Activated naive CD4-positive, alpha-beta T cell treated with anti-CD3 and anti-CD28 coated beads for 36 hours (primary cell): ENCODE measurements at regions of chr21 and their contacts with region 1.

Region 1: GRCh38 chr21:37220981-37221664 is 46.0 kb downstream of the VPS26C start:
- DNase-seq: peak; percentile 98
- H3K4me3 Mint-ChIP-seq: peak overlapping the region; percentile 88
- H3K27ac Mint-ChIP-seq: peak overlapping the region; percentile 97
- H3K4me1 Mint-ChIP-seq: peaks cover 52% of the 10 kb centered on the region
- H3K27me3 Mint-ChIP-seq: no peaks in the 10 kb centered on the region

Region 2: GRCh38 chr21:36976882-36977651 is 244.1 kb before region 1 on chr21:
- CTCF ChIA-PET with region 1: no interaction called
- intact Hi-C with region 1: loop called (anchors 2 kb)
- DNase-seq: peak; percentile 75
- H3K4me3 Mint-ChIP-seq: no peak overlapping the region
- H3K27ac Mint-ChIP-seq: no peak overlapping the region
- H3K4me1 Mint-ChIP-seq: peaks cover 23% of the 10 kb centered on the region
- H3K27me3 Mint-ChIP-seq: peaks cover 9% of the 10 kb centered on the region

Region 3: GRCh38 chr21:37184784-37185593 is 36.1 kb before region 1 on chr21:
- CTCF ChIA-PET with region 1: no interaction called
- intact Hi-C with region 1: loop called (anchors 2 kb)
- DNase-seq: no peak
- H3K4me3 Mint-ChIP-seq: no peak overlapping the region
- H3K27ac Mint-ChIP-seq: peak overlapping the region; percentile 19
- H3K4me1 Mint-ChIP-seq: peaks cover 14% of the 10 kb centered on the region
- H3K27me3 Mint-ChIP-seq: no peaks in the 10 kb centered on the region

Region 4: GRCh38 chr21:37267269-37268184 is 46.4 kb after region 1 on chr21 and contains the start of gene VPS26C:
- CTCF ChIA-PET with region 1: no interaction called
- intact Hi-C with region 1: loop called (anchors 1 kb)
- DNase-seq: peak; percentile 99
- H3K4me3 Mint-ChIP-seq: peak within 1 kb of the TSS; percentile 94
- H3K27ac Mint-ChIP-seq: peak within 1 kb of the TSS; percentile 96
- H3K4me1 Mint-ChIP-seq: peaks cover 38% of the 10 kb centered on the region
- H3K27me3 Mint-ChIP-seq: no peaks in the 10 kb centered on the region
- total RNA-seq, gene VPS26C: 50.1 to 51.0 TPM

Region 5: GRCh38 chr21:37463083-37463801 is 242.1 kb after region 1 on chr21:
- CTCF ChIA-PET with region 1: interaction called, 3 read pairs
- intact Hi-C with region 1: loop called (anchors 1 kb)
- DNase-seq: peak; percentile 35
- H3K4me3 Mint-ChIP-seq: no peak overlapping the region
- H3K27ac Mint-ChIP-seq: peak overlapping the region; percentile 46
- H3K4me1 Mint-ChIP-seq: peaks cover 71% of the 10 kb centered on the region
- H3K27me3 Mint-ChIP-seq: no peaks in the 10 kb centered on the region

Region 6: GRCh38 chr21:37563641-37564340 is 342.7 kb after region 1 on chr21:
- CTCF ChIA-PET with region 1: no interaction called
- intact Hi-C with region 1: loop called (anchors 1 kb)
- DNase-seq: peak; percentile 92
- H3K4me3 Mint-ChIP-seq: peak overlapping the region; percentile 88
- H3K27ac Mint-ChIP-seq: peak overlapping the region; percentile 99
- H3K4me1 Mint-ChIP-seq: peaks cover 20% of the 10 kb centered on the region
- H3K27me3 Mint-ChIP-seq: no peaks in the 10 kb centered on the region

Region 7: DNA sequence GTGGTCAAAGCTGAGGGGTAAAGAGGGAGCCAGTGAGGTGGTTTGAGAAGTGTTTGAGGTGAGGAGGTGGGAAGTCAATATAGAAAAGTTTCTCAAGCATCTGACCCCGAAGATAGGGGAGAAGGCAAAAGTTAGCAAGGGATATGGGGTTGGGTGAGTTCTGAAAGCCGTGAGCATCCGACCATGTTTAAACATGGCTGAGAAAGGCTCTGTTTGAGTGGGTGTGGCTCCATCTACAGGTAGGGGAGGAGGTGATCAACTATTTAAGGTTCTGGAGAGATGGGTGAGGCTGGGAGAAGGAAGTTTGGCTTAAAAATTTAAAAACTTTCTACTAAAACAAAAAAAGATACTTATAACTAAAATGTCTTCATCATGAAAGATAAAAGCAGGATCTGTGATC is 421.4 kb after region 1 on chr21:
- CTCF ChIA-PET with region 1: no interaction called
- intact Hi-C with region 1: loop called (anchors 1 kb)
- DNase-seq: peak; percentile 66
- H3K4me3 Mint-ChIP-seq: no peak overlapping the region
- H3K27ac Mint-ChIP-seq: no peak overlapping the region
- H3K4me1 Mint-ChIP-seq: peaks cover 2% of the 10 kb centered on the region
- H3K27me3 Mint-ChIP-seq: peaks cover 19% of the 10 kb centered on the region